ENCODE measurements at regions of chr9 and their contacts with region 1.

Region 1: DNA sequence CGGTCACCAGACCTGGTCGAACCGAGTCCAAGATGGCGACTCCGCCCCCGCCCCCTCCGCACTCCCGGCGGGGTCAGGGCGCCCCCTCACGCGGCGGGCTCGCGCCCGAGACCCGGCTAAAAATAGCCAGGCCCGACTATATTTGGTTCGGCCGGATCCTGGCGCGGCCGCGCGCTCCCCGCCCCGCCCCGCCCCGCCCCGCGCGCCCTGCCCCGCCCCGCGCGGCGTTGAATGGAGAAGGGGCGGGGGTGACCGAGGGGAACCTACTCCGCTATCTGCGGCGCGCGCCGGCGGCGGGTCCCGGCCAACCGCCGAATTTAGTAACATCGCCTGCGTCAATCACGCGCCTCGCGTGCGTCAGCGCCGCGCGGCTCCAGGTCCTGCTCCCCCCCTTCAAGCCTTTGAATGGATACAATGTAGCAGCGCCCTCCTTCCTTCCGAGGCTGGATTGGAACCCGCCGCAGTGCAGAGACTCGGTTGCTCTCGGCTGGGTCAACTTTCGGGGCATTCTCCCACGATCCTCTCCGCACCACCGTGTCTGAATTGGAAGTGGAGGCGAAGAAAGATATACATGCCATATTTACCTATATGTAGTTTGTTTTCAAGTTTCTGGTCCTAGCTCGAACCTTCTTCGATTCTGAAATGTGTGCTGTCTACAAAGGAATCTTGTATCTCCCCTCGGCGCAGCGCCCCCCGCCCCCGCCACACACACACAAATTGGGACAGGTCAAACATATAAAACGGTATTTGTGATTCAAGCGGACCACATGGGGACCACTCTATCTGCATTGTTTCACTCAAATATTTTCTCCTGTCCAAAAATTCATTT is 1.6 kb upstream of the NR4A3 start:
- DNase-seq: peak; percentile 87
- H3K4me3 Mint-ChIP-seq: peak overlapping the region; percentile 100
- H3K27ac Mint-ChIP-seq: peak overlapping the region; percentile 98
- H3K4me1 Mint-ChIP-seq: peaks cover 44% of the 10 kb centered on the region
- H3K27me3 Mint-ChIP-seq: peaks cover 3% of the 10 kb centered on the region

Region 2: DNA sequence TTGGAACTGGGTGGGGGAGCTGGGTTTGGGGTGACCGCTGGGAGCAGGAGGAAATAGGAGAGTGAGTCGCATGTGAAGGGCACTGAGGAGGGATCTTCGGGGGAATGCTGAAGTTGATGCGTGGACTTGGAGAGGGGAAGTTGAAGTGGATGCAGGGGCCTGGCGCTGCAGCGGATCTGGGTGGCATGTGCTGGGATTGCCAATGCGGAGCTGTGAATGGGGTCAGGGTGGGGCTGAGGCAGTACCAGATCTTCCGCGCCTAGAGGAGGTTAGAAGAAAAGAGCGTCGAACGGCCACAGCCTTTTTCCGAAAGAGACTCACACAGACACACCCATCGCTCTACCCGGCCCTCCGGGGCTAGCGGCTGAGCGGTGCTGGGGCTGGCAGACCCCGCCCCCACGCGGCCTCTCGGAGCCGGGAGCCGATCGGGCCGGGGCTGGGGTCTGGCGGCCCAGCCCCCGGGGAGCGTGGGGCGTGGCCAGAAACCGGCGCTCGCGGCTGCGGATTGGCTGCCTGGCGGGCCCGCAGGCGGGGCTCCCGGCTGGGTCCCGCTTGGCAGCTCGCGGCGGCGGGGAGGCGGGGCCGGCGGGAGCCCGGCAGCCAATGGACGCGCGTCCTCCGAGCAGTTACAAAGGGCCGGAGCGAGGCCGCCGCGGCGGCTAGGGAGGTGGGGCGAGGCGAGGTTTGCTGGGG is 715.5 kb before region 1 on chr9 and contains the start of gene TGFBR1:
- intact Hi-C with region 1: loop called (anchors 5 kb)
- DNase-seq: peak; percentile 96
- H3K4me3 Mint-ChIP-seq: peak within 1 kb of the TSS; percentile 90
- H3K27ac Mint-ChIP-seq: peak within 1 kb of the TSS; percentile 88
- H3K4me1 Mint-ChIP-seq: peaks cover 50% of the 10 kb centered on the region
- H3K27me3 Mint-ChIP-seq: no peaks in the 10 kb centered on the region
- total RNA-seq, gene TGFBR1: 30.6 and 30.8 TPM in 2 replicates

Region 3: DNA sequence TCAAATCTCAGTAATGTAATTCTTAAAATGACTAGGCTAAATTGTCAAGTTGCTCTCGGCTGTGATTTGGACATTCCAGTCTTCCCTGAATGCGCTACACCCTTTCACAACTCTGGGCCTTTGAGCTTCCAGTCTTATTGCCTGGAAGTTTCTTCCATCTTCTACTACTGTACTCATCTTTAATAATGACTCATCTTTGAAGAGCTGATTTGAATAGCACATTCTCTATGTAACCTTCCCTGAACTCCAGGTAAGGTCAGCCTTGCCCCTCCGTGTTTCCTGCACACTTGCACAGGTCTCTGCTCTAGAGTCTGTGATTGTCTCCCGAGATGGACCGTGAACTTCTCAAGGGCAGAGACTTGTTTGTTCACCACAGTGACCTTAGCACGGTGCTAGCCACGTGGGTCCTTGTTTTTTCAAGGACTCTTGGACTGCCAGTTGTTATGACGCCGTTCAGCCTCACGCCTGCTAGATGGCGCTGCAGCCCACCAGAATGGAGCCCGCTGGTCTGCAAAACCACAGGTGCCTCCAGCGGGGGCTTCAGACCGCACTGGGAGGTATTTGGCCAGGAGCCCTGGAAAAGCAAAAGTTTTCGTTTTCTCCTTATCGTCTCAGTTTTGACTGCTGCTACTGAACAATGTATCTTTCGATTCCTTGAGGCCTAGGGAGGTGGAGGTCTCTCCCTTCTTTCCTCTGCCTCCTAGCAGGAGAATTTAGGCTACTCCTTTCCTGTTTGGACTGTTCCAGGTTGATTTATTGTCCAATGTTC is 553.6 kb before region 1 on chr9:
- intact Hi-C with region 1: loop called (anchors 5 kb)
- DNase-seq: peak; percentile 41
- H3K4me3 Mint-ChIP-seq: peak overlapping the region; percentile 13
- H3K27ac Mint-ChIP-seq: peak overlapping the region; percentile 51
- H3K4me1 Mint-ChIP-seq: peaks cover 33% of the 10 kb centered on the region
- H3K27me3 Mint-ChIP-seq: peaks cover 10% of the 10 kb centered on the region

Region 4: GRCh38 chr9:99807276-99807852 is 12.7 kb before region 1 on chr9:
- intact Hi-C with region 1: loop called (anchors 1 kb)
- DNase-seq: peak; percentile 42
- H3K4me3 Mint-ChIP-seq: no peak overlapping the region
- H3K27ac Mint-ChIP-seq: no peak overlapping the region
- H3K4me1 Mint-ChIP-seq: peaks cover 44% of the 10 kb centered on the region
- H3K27me3 Mint-ChIP-seq: peaks cover 3% of the 10 kb centered on the region

Region 5: GRCh38 chr9:99833735-99834134 is 13.7 kb after region 1 on chr9:
- intact Hi-C with region 1: no loop called
- DNase-seq: no peak
- H3K4me3 Mint-ChIP-seq: no peak overlapping the region
- H3K27ac Mint-ChIP-seq: no peak overlapping the region
- H3K4me1 Mint-ChIP-seq: peaks cover 39% of the 10 kb centered on the region
- H3K27me3 Mint-ChIP-seq: peaks cover 4% of the 10 kb centered on the region

Region 6: GRCh38 chr9:99954819-99955218 is 134.7 kb after region 1 on chr9:
- intact Hi-C with region 1: loop called (anchors 5 kb)
- DNase-seq: no peak
- H3K4me3 Mint-ChIP-seq: no peak overlapping the region
- H3K27ac Mint-ChIP-seq: no peak overlapping the region
- H3K4me1 Mint-ChIP-seq: peaks cover 12% of the 10 kb centered on the region
- H3K27me3 Mint-ChIP-seq: no peaks in the 10 kb centered on the region

Region 7: DNA sequence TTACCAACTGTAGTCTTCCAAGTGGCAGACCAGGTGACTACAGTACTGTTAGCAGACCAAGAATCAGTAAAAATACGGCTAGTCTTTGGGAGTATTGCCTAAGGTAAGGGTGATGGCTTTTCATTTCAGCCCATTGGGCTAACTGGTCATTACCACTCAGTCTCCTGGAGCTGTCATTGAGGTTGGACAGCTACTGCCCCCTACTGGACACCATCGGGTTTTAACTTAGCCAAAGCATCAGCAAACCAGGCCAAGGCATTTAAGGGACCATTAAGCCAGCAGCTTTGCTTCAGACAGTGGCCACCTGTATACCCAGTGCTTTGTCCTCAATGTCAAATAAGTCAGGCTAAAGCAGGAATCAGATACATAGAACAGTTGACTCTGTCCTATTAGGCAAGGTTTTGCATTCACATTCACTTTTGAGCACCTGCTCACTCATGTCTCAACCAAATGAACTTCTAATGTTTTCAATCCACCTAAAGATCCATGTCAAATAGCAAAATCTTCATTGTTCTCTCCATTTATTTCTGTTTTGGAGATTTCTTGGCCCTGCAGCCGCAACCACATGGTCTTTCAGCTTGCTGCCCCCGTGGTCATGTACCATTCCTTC is 396.2 kb after region 1 on chr9:
- intact Hi-C with region 1: loop called (anchors 10 kb)
- DNase-seq: peak; percentile 49
- H3K4me3 Mint-ChIP-seq: no peak overlapping the region
- H3K27ac Mint-ChIP-seq: no peak overlapping the region
- H3K4me1 Mint-ChIP-seq: peaks cover 10% of the 10 kb centered on the region
- H3K27me3 Mint-ChIP-seq: no peaks in the 10 kb centered on the region